GM12878 (cell line): ENCODE measurements at regions of chr1 and their contacts with region 1.

Region 1: GRCh38 chr1:15918962-15919715 is 56.8 kb downstream of the ZBTB17 start:
- DNase-seq: peak; percentile 70
- ATAC-seq: peak; percentile 93
- H3K4me3 ChIP-seq: no peak overlapping the region
- H3K27ac ChIP-seq: no peak overlapping the region
- H3K4me1 ChIP-seq: peaks cover 33% of the 10 kb centered on the region
- H3K27me3 ChIP-seq: no peaks in the 10 kb centered on the region
- CTCF ChIP-seq: no peak
- EP300 ChIP-seq: peak in 1 of 2 experiments; percentile 75; a peak in 1 of 4 replicates
- POLR2A ChIP-seq: no peak
- RAD21 ChIP-seq: no peak

Region 2: GRCh38 chr1:15810073-15810472 is 109.1 kb before region 1 on chr1:
- CTCF ChIA-PET with region 1: interaction called, 22 read pairs
- POLR2A ChIA-PET with region 1: no interaction called
- RAD21 ChIA-PET with region 1: interaction called, 11 read pairs
- SMC1A ChIA-PET with region 1: interaction called, 11 read pairs
- in situ Hi-C with region 1: no loop called
- intact Hi-C with region 1: loop called (anchors 10 kb)
- DNase-seq: no peak
- ATAC-seq: no peak
- H3K4me3 ChIP-seq: no peak overlapping the region
- H3K27ac ChIP-seq: no peak overlapping the region
- H3K4me1 ChIP-seq: no peaks in the 10 kb centered on the region
- H3K27me3 ChIP-seq: no peaks in the 10 kb centered on the region
- CTCF ChIP-seq: no peak
- EP300 ChIP-seq: no peak
- POLR2A ChIP-seq: no peak
- RAD21 ChIP-seq: no peak